RWPE1 (cell line): ENCODE measurements at regions of chr14 and their contacts with region 1.

Region 1: GRCh38 chr14:59055439-59056045 is 132.9 kb upstream of the DAAM1 start:
- DNase-seq: peak; percentile 67
- H3K27ac ChIP-seq: no peak overlapping the region
- CTCF ChIP-seq: peak; percentile 78

Region 2: DNA sequence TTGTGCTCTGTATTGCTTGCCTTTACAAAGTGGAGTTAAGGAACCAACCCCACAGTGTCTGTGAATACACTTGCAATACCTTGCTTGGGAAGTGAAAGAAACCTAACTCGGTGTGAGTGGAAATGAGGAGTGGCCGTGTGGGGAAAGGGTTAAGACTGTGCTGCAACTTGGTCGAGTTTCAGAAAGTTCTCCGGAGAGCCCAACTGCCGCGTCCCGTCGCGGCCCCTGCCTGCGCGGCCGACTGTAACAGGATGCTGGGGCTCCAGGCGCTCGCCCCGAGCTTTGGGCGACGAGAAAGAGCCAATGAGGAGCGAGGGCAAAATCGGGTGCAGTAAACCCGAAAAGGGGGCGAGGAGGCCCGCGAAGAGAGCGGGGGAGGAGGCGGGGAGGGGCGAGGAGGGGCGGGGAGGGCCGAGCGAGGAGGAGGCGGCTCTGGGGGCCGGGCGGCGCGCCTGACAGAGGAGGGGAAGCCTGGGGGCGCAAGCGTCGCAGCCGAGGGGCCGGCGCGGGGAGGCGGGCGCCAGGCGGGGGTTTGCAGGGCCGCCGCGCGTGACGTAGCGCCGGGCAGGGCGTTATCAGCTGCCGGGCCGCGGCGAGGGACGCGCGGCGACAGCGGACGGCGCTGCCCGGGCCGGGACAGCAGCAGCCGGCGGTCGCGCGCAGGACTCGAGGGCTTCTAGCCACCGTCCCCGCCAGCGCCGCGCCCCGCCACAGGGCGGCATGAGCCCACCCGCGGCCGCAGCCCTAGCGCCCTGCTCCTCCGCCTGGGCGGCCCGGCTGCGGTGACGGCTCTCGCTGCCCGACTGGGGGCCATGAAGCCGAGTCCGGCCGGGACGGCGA is 417.9 kb before region 1 on chr14 and contains the start of gene DACT1:
- CTCF ChIA-PET with region 1: interaction called, 10 read pairs
- POLR2A ChIA-PET with region 1: no interaction called
- DNase-seq: peak; percentile 17
- H3K27ac ChIP-seq: peak within 1 kb of the TSS; percentile 58
- CTCF ChIP-seq: no peak